AG04449 (cell line): ENCODE measurements at regions of chr20 and their contacts with region 1.

Region 1: GRCh38 chr20:38434743-38435554 is at the start of gene SNHG17:
- DNase-seq: peak; percentile 76
- H3K4me3 ChIP-seq: peak within 1 kb of the TSS; percentile 92
- CTCF ChIP-seq: peak; percentile 99

Region 2: GRCh38 chr20:38402816-38403215 is 32.1 kb before region 1 on chr20:
- CTCF ChIA-PET with region 1: no interaction called
- POLR2A ChIA-PET with region 1: no interaction called
- DNase-seq: no peak
- H3K4me3 ChIP-seq: no peak overlapping the region
- CTCF ChIP-seq: no peak

Region 3: DNA sequence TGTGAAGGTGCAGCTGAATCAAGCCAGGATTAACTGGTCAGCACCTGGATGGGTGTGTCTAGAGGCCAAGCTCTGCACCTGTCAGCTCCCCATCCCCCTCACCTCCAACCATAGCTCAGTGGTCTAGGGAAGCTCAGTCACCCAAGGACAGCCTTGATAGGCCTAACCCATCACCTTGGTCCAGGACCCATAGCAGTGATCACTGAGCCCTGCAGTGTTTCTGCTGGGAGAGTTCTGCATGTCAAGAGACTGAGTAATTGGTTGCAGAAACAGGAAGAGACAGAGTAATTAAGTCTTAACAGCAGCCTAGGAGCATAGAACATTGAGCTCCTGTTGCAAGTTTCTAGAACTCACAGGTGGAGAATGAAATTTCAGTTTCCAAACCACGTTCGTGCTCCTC is 19.0 kb after region 1 on chr20:
- CTCF ChIA-PET with region 1: interaction called, 268 read pairs
- POLR2A ChIA-PET with region 1: interaction called, 8 read pairs
- DNase-seq: no peak
- H3K4me3 ChIP-seq: no peak overlapping the region
- CTCF ChIP-seq: no peak